H1 (cell line): ENCODE measurements at regions of chr2 and their contacts with region 1.

Region 1: GRCh38 chr2:205776139-205776538 is 93.8 kb downstream of the NRP2 start:
- DNase-seq: peak; percentile 64 to 96
- H3K4me3 ChIP-seq: no peak overlapping the region
- H3K27ac ChIP-seq: no peak overlapping the region
- H3K4me1 ChIP-seq: no peaks in the 10 kb centered on the region; a peak in 2 of 7 replicates
- H3K27me3 ChIP-seq: no peaks in the 10 kb centered on the region; a peak in 1 of 7 replicates
- CTCF ChIP-seq: peak; percentile 95 to 99 (median 98)
- EP300 ChIP-seq: no peak
- POLR2A ChIP-seq: no peak
- RAD21 ChIP-seq: peak; percentile 96 to 97

Region 2: GRCh38 chr2:205386109-205386508 is 390.0 kb before region 1 on chr2:
- CTCF ChIA-PET with region 1: no interaction called
- POLR2A ChIA-PET with region 1: no interaction called
- DNase-seq: no peak
- H3K4me3 ChIP-seq: no peak overlapping the region
- H3K27ac ChIP-seq: no peak overlapping the region
- H3K4me1 ChIP-seq: peaks cover 0 to 7% (median 2%) of the 10 kb centered on the region in 4 experiments; a peak in 2 of 7 replicates
- H3K27me3 ChIP-seq: no peaks in the 10 kb centered on the region
- CTCF ChIP-seq: no peak
- EP300 ChIP-seq: no peak
- POLR2A ChIP-seq: no peak
- RAD21 ChIP-seq: no peak

Region 3: DNA sequence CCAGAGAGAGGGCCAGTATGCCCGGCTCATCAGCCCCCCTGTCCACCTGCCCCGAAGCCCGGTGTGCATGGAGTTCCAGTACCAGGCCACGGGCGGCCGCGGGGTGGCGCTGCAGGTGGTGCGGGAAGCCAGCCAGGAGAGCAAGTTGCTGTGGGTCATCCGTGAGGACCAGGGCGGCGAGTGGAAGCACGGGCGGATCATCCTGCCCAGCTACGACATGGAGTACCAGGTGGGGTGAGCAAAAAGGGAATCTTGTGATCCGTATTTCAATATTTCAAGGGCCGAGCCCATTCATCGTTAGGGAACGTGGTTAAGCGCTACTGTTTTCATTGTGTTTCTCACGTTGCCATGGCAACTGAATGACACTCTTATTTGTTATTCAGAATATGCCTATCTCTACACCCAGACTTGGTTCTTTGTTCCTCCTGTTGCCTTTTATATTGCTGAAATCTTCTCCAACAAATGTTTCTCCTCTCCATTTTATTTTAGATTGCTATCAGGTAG is 12.4 kb before region 1 on chr2:
- CTCF ChIA-PET with region 1: interaction called, 50 read pairs
- POLR2A ChIA-PET with region 1: interaction called, 3 read pairs
- DNase-seq: peak; percentile 68 to 98
- H3K4me3 ChIP-seq: peak overlapping the region; percentile 21 to 51 (median 41); a peak in 6 of 8 replicates
- H3K27ac ChIP-seq: peak overlapping the region; percentile 96
- H3K4me1 ChIP-seq: peaks cover 6 to 19% (median 8%) of the 10 kb centered on the region in 4 experiments
- H3K27me3 ChIP-seq: peaks cover 0 to 5% (median 0%) of the 10 kb centered on the region in 4 experiments; a peak in 2 of 7 replicates
- CTCF ChIP-seq: peak; percentile 80 to 97 (median 91)
- EP300 ChIP-seq: peak in 1 of 2 experiments; percentile 94; a peak in 1 of 3 replicates
- POLR2A ChIP-seq: peak; percentile 24 to 46; a peak in 2 of 3 replicates
- RAD21 ChIP-seq: peak; percentile 55 to 70

Region 4: GRCh38 chr2:205814039-205814364 is 37.9 kb after region 1 on chr2:
- CTCF ChIA-PET with region 1: interaction called, 64 read pairs
- POLR2A ChIA-PET with region 1: no interaction called
- DNase-seq: no peak
- H3K4me3 ChIP-seq: no peak overlapping the region; a peak in 1 of 8 replicates
- H3K27ac ChIP-seq: no peak overlapping the region
- H3K4me1 ChIP-seq: peaks cover 0 to 6% (median 1%) of the 10 kb centered on the region in 4 experiments; a peak in 3 of 7 replicates
- H3K27me3 ChIP-seq: no peaks in the 10 kb centered on the region
- CTCF ChIP-seq: no peak
- EP300 ChIP-seq: no peak
- POLR2A ChIP-seq: no peak
- RAD21 ChIP-seq: no peak

Region 5: GRCh38 chr2:205872716-205873115 is 96.6 kb after region 1 on chr2:
- CTCF ChIA-PET with region 1: interaction called, 32 read pairs
- POLR2A ChIA-PET with region 1: no interaction called
- DNase-seq: no peak
- H3K4me3 ChIP-seq: no peak overlapping the region
- H3K27ac ChIP-seq: no peak overlapping the region
- H3K4me1 ChIP-seq: no peaks in the 10 kb centered on the region
- H3K27me3 ChIP-seq: no peaks in the 10 kb centered on the region
- CTCF ChIP-seq: no peak
- EP300 ChIP-seq: no peak
- POLR2A ChIP-seq: no peak
- RAD21 ChIP-seq: no peak

Region 6: GRCh38 chr2:205892251-205892655 is 116.1 kb after region 1 on chr2:
- CTCF ChIA-PET with region 1: interaction called, 185 read pairs
- POLR2A ChIA-PET with region 1: no interaction called
- DNase-seq: no peak
- H3K4me3 ChIP-seq: no peak overlapping the region
- H3K27ac ChIP-seq: no peak overlapping the region
- H3K4me1 ChIP-seq: no peaks in the 10 kb centered on the region; a peak in 1 of 7 replicates
- H3K27me3 ChIP-seq: no peaks in the 10 kb centered on the region
- CTCF ChIP-seq: no peak
- EP300 ChIP-seq: no peak
- POLR2A ChIP-seq: no peak
- RAD21 ChIP-seq: no peak

Region 7: GRCh38 chr2:205934443-205934842 is 158.3 kb after region 1 on chr2:
- CTCF ChIA-PET with region 1: interaction called, 136 read pairs
- POLR2A ChIA-PET with region 1: no interaction called
- DNase-seq: no peak
- H3K4me3 ChIP-seq: no peak overlapping the region
- H3K27ac ChIP-seq: no peak overlapping the region
- H3K4me1 ChIP-seq: peaks cover 0 to 9% (median 2%) of the 10 kb centered on the region in 4 experiments; a peak in 4 of 7 replicates
- H3K27me3 ChIP-seq: no peaks in the 10 kb centered on the region
- CTCF ChIP-seq: peak in 2 of 3 experiments; percentile 36 to 52; a peak in 2 of 4 replicates
- EP300 ChIP-seq: no peak
- POLR2A ChIP-seq: no peak
- RAD21 ChIP-seq: peak; percentile 50 to 51